ENCODE measurements at regions of chr3 and their contacts with region 1.

Region 1: DNA sequence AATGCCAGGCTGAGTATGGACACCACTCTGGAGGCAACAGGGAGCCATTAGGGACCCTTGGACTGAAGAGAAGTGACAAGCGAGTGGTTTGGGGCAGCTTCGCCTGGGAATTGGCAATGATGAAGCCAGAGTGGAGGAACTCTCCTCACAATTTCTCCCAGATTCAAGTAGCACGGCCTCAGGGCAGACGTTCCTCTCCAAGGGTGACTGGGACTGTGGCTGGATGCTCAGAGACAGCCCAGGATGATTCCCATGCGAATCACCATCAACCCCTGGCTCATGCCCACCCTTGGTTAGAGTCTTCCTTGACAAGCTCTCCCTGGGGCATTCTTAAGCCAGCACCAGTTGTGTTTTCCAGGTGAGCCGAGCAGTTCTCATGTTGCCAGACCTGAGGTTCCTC is 16.3 kb upstream of the DOCK3 start:
- DNase-seq: no peak
- H3K4me3 ChIP-seq: no peak overlapping the region
- H3K27ac ChIP-seq: no peak overlapping the region
- H3K4me1 ChIP-seq: peaks cover 7% of the 10 kb centered on the region
- H3K27me3 ChIP-seq: no peaks in the 10 kb centered on the region
- CTCF ChIP-seq: no peak

Region 2: GRCh38 chr3:50627407-50628051 is 30.9 kb before region 1 on chr3:
- CTCF ChIA-PET with region 1: interaction called, 7 read pairs
- POLR2A ChIA-PET with region 1: no interaction called
- intact Hi-C with region 1: loop called (anchors 2 kb)
- DNase-seq: peak; percentile 83 to 96
- H3K4me3 ChIP-seq: peak overlapping the region; percentile 19; the same call in 1 of the 2 replicates
- H3K27ac ChIP-seq: peak overlapping the region; percentile 73
- H3K4me1 ChIP-seq: peaks cover 83% of the 10 kb centered on the region
- H3K27me3 ChIP-seq: no peaks in the 10 kb centered on the region
- CTCF ChIP-seq: peak; percentile 64

Region 3: DNA sequence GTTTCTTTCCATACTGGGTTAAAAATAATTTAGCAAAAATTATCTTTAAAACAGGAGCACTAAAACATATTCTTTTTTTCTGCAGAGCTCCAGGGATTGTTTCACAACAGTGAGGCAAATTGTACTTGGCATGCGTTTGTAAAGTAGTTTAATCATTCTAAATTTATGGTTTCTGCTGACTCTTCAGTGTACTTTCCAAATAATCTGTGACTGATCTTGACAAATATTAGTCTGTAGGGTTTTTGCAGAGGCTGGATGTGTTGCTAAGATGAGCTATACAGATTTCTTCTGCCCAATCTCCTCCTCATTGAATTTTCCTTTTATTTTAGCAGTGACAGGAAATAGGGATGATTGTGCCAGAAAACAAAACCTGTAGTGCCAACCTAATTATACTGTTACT is 398.7 kb after region 1 on chr3:
- CTCF ChIA-PET with region 1: interaction called, 3 read pairs
- POLR2A ChIA-PET with region 1: interaction called, 24 read pairs
- intact Hi-C with region 1: no loop called
- DNase-seq: no peak
- H3K4me3 ChIP-seq: no peak overlapping the region
- H3K27ac ChIP-seq: no peak overlapping the region
- H3K4me1 ChIP-seq: no peaks in the 10 kb centered on the region
- H3K27me3 ChIP-seq: no peaks in the 10 kb centered on the region
- CTCF ChIP-seq: no peak

Region 4: GRCh38 chr3:51819709-51820406 is 1161.4 kb after region 1 on chr3:
- CTCF ChIA-PET with region 1: no interaction called
- POLR2A ChIA-PET with region 1: interaction called, 26 read pairs
- intact Hi-C with region 1: no loop called
- DNase-seq: no peak
- H3K4me3 ChIP-seq: no peak overlapping the region
- H3K27ac ChIP-seq: no peak overlapping the region
- H3K4me1 ChIP-seq: no peaks in the 10 kb centered on the region
- H3K27me3 ChIP-seq: peaks cover 14% of the 10 kb centered on the region; the same call in 1 of the 2 replicates
- CTCF ChIP-seq: peak; percentile 51

Measured in PC-9 (cell line).